Posterior vena cava (tissue), 2 donors: ENCODE measurements at regions of chr17 and their contacts with region 1.

Region 1: GRCh38 chr17:39401412-39402243 is at the start of gene FBXL20:
- DNase-seq: peak; percentile 98
- total RNA-seq, gene FBXL20: 13.7 to 15.4 TPM

Region 2: DNA sequence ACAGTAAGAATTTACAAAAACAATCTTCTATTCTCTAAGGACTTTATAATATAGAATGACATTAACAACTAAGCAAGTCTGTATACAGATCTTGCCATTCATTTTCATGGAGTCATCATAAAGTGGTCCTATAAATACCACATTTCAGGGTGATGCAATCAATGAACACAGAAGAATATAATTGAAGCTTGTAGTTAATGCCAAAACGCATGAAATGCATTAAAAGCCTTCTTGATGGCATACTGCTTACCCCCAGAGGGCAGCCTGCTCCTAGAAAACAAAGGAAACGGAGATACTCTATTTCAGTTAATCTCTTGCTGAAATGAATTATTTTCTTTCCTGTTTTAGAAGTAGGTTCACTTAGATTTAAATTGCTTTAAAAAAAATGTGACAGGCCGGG is 130.7 kb before region 1 on chr17:
- intact Hi-C with region 1: loop called in 1 of 2 experiments (anchors 10 kb)
- DNase-seq: no peak